Mucosa of descending colon (tissue), 3 donors: ENCODE measurements at regions of chr9 and their contacts with region 1.

Region 1: GRCh38 chr9:4630836-4631235 is 31.3 kb upstream of the PLPP6 start:
- DNase-seq: no peak
- ATAC-seq: no peak
- H3K4me3 ChIP-seq: no peak overlapping the region
- H3K4me1 ChIP-seq: no peaks in the 10 kb centered on the region
- CTCF ChIP-seq: no peak

Region 2: DNA sequence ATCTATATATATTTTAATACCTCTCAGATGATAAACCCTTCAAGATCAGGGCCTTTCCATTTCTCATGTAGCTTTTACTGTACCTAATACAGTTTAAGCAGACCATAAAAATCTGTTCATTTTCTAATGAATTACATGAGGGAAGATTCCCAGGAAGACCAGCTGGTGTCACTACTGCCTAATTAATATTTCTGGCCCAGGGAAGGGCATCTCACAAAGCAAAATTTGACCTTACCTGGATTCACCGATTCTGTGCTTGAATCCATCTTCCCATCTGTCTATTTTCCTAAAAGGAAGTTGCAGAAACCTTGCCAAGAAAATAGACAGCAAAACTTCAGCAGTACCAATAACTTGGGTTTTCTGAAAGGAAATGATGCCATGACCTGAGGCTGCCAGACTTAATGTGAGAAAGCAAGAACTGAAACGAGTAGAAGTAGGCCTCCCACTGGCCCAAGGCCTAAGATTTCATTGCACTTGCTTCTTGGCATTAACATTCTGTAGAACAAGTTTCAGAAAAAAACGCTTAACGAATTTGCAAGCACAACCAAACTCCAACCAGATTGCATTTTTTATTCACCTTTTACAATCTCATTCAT is 248.0 kb before region 1 on chr9:
- intact Hi-C with region 1: loop called in 1 of 2 experiments (anchors 10 kb)
- DNase-seq: peak in 1 of 3 donors; percentile 14
- ATAC-seq: no peak
- H3K4me3 ChIP-seq: no peak overlapping the region
- H3K4me1 ChIP-seq: no peaks in the 10 kb centered on the region
- CTCF ChIP-seq: peak; percentile 25

Region 3: DNA sequence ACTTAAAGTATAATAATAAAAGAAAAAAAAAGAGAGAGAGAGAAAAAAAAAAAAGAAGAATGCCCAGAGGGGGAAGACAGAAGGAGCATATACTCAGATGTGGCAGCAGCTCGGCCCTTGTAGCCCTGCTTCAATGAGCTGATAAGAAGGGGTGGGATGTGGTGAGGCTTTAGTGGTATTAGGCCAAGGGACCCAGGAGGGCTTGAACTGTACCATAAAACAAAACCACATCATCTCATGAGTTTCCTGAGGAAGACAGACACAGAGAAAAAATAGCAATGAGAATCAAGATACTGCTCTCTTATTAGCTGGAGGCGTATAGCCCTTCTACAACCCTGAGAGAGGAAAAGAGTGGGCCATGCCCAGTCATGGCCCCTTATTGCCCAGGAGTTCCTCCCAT is 67.7 kb before region 1 on chr9:
- intact Hi-C with region 1: no loop called
- DNase-seq: no peak
- ATAC-seq: no peak
- H3K4me3 ChIP-seq: no peak overlapping the region
- H3K4me1 ChIP-seq: no peaks in the 10 kb centered on the region
- CTCF ChIP-seq: no peak

Region 4: DNA sequence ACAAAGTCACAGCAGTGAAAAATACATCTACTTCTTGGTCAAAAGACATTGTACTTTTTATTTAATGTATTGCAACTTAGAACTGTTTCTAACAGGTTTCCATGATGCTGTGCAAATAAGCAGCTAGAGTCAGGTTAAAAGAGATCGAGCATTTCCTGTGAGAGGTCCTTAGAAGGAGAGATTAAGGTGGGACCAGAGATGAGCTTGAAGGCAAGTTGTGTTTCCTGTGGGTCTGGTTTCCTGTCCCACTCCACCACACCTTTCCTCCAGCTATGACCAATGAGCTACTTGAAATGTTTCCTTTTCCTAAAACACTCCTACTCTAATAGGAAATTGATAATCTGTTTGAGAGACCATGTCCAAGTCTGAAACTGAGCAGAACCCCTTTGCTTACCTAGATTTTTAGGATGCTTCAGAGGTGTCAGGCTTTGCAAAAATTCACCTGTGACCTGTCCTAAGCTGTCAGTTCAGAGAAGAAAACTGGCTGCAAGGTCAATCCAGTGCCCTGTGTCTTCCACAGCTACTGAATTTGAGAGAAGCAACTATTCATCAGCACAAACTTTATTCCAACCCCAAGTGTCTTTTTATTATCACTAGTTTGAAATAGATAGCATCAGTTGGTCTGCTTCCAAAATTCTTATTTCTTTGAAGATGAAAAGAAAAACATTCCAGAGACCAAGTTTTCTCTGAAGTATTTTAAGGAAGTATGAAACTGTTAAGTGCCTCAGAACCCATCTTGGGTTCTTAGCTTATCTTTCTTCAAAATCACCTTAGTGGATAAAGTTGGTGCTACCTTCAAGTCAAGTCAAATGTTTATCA is 722.0 kb after region 1 on chr9:
- intact Hi-C with region 1: no loop called
- DNase-seq: no peak
- ATAC-seq: peak; percentile 55
- H3K4me3 ChIP-seq: no peak overlapping the region
- H3K4me1 ChIP-seq: no peaks in the 10 kb centered on the region
- CTCF ChIP-seq: no peak